Activated CD4-positive, alpha-beta T cell treated with anti-CD3 and anti-CD28 coated beads for 36 hours (primary cell): ENCODE measurements at regions of chr4 and their contacts with region 1.

Region 1: GRCh38 chr4:5890063-5890727 is 2.7 kb downstream of the CRMP1 start:
- DNase-seq: peak; percentile 25
- ATAC-seq: no peak
- H3K4me3 Mint-ChIP-seq: no peak overlapping the region
- H3K27ac Mint-ChIP-seq: no peak overlapping the region
- H3K4me1 Mint-ChIP-seq: peaks cover 5% of the 10 kb centered on the region
- H3K27me3 Mint-ChIP-seq: peaks cover 53% of the 10 kb centered on the region

Region 2: DNA sequence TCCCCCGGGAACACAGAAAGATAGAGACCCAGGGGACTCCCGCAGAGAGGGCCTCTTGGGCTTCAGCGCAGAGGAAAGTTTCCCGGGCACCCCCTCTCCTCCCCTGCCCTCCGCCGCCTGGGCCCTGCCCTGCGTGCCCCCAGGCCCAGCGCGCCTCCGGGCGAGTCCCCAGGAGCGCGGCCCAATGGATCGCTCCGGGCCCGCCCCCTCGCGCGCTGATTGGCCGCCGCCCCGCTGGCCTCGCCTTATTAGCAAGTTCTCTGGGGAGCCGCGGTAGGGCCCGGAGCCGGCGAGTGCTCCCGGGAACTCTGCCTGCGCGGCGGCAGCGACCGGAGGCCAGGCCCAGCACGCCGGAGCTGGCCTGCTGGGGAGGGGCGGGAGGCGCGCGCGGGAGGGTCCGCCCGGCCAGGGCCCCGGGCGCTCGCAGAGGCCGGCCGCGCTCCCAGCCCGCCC is 1030.8 kb before region 1 on chr4 and contains the start of gene MSX1:
- CTCF ChIA-PET with region 1: no interaction called
- POLR2A ChIA-PET with region 1: no interaction called
- intact Hi-C with region 1: loop called in 1 of 2 experiments (anchors 5 kb)
- DNase-seq: peak; percentile 76
- ATAC-seq: peak; percentile 86
- H3K4me3 Mint-ChIP-seq: peak within 1 kb of the TSS; percentile 38
- H3K27ac Mint-ChIP-seq: no peak within 1 kb of the TSS
- H3K4me1 Mint-ChIP-seq: peaks cover 40% of the 10 kb centered on the region
- H3K27me3 Mint-ChIP-seq: peaks cover 64% of the 10 kb centered on the region
- total RNA-seq, gene MSX1: 0.09 TPM in 1 of 2 experiments, not detected in the other

Region 3: DNA sequence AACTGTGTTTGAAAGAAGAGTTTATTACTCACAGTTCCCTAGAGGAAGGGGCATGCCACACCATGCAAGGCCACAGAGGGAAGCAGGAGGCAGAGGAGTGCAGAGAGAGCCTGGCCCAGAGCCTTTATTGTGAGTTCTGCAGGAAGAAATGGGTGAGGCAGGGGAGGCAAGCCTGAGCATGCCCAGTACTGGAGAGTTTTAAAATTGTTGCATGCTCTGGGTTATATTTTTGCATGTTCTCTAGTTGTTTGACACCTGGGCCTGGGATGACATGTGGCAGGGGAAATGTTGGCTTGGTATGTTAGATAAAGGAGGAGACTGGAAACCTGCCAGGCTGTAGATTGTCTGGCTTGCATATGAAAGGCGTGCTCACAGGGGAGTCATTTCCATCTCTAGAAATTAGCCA is 22.4 kb after region 1 on chr4:
- CTCF ChIA-PET with region 1: no interaction called
- POLR2A ChIA-PET with region 1: no interaction called
- intact Hi-C with region 1: no loop called
- DNase-seq: no peak
- ATAC-seq: no peak
- H3K4me3 Mint-ChIP-seq: no peak overlapping the region
- H3K27ac Mint-ChIP-seq: no peak overlapping the region
- H3K4me1 Mint-ChIP-seq: no peaks in the 10 kb centered on the region
- H3K27me3 Mint-ChIP-seq: peaks cover 7% of the 10 kb centered on the region